ENCODE measurements at regions of chr12 and their contacts with region 1.

Region 1: GRCh38 chr12:32274665-32275064 is 124.7 kb upstream of the FGD4 start:
- DNase-seq: no peak
- H3K4me3 ChIP-seq: no peak overlapping the region
- CTCF ChIP-seq: no peak

Region 2: DNA sequence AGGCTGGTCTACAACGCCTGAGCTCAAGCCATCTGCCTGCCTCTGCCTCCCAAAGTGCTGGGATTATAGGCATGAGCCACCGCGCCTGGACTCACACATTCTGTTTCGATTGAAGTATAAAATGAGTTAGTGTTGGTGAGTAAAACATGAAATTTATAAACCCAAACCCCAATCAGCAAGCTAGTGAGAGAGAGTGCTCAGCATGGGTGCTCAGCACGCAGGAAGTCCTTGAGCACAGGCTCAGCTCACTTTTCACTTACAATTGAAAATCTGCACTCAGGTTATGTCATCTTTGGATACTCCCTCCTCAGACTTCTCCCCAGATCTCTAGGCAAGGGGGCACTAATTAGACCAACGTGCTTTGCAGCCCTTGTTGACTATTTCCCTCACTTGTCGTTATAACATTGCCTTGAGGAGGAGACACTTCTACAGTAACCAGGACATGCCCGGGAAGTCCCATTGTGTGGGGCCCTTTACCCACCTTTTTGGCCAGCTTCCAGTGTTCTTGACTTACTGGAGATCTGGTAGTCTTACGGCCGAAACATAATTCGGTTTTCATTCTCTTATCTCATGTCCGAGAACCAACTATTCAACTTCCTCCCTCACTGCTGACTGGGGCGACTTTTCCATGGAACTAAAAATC is 477.3 kb before region 1 on chr12:
- in situ Hi-C with region 1: no loop called
- DNase-seq: no peak
- H3K4me3 ChIP-seq: no peak overlapping the region
- CTCF ChIP-seq: no peak

Region 3: DNA sequence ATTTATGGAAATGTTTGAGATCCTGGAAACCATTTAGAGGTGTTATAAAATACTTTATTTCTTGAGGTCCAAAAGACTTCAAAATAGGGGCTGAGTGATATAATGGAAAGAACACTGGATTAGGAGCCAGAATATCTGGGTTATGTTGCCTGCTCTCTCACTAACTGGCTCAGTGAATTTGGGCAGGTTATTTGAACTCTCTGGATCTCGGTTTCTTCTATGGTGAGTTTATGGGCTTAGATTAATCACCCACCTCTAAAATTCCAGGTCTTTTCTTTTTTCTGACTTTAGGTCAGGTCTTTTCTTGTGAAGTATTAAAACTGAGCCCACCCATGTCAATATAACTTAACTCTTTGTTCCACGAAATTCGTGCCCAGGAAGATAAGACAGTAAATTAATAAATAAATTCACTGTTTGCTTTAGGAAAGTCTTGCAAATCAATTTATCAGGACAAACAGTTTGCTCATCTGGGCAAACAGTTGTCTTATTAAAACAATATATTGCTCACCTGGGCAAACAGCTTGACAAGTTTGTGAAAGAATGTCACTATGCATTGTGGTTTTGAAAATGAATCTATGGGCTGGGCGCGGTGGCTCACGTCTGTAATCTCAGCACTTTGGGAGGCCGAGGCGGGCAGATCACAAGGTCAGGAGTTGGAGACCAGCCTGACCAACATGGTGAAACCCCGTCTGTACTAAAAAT is 87.7 kb before region 1 on chr12:
- in situ Hi-C with region 1: loop called (anchors 5 kb)
- DNase-seq: no peak
- H3K4me3 ChIP-seq: no peak overlapping the region
- CTCF ChIP-seq: no peak

Region 4: DNA sequence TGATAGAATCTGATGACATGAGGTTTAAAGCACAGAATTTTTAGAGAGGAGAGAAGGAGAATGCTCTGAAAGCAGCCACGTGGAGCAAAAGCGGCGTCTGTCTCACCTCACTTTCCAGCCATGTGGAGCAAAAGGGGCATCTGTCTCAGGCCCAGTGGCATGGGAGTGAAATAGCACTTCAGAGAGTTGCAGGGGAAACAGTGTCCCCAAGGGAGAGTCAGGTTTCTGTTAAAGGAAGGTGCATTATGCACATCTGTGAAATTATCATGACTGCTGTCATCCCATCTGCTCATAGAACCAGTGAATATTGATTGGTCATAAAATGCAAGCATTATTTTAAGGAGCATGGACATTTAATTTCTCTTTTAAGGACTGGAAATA is 44.1 kb before region 1 on chr12:
- in situ Hi-C with region 1: no loop called
- DNase-seq: no peak
- H3K4me3 ChIP-seq: no peak overlapping the region
- CTCF ChIP-seq: no peak